ENCODE measurements at regions of chr2 and their contacts with region 1.

Region 1: GRCh38 chr2:85327822-85328617 is at the start of gene TGOLN2:
- DNase-seq: peak; percentile 75 to 97 (median 92)

Region 2: DNA sequence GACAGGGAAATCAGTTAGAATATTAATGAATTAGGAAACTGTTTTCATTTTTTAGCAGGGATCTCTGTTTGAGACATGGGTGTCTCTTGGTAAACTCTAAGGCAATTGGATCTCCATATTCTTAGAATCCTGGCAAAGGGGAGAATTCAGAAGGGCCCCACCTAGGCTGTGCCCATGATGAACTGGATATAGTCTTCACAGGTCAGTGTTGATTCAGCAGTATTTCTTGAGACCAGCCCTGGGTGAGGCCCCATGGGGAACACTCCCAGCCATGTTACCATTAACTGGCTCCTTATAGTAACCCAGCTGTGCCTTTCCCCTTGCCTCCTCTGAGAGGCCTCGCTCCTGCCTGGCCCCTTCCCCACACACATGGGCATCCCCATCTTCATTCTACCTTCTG is 118.1 kb before region 1 on chr2:
- intact Hi-C with region 1: no loop called
- DNase-seq: no peak

Region 3: GRCh38 chr2:85312404-85312803 is 15.6 kb before region 1 on chr2:
- intact Hi-C with region 1: no loop called
- DNase-seq: no peak

Region 4: DNA sequence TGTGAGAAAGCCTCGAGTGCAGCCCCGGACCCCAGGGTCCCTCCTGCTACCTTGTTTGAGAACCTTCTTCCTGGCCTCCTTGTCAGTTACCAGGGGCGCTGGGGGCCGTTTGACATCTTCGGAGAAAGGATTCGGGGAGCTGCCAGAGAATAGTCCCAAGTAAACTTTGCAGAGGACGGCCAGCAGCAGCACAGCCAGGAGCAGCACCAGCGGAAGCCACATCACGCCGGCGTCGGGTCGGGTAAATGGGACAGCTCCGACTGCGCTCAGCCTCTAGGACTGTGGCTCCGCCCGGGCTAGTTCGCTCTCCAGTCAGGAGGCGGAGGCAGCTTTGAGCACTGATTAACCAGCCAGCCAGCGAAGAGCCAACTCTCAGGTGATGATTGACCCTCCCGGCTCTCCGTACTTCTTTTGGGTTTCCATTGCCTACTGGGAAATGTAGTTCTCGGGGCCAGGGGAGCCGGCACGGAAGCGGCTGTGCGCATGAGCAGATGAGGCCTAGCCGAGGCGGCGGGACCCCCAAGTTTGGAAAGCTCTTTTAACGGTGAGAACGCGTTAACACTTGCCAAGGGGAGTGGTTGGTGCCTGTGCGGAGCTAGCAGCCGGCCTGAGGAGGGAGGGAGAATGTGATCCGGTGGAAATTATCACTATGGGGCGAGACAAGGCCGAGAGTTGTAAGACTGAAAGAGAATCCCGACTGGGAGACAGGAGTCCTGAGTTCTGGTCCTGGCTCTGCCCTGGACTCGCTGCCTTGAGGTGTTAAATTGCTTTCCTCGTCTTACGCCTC is 26.5 kb after region 1 on chr2 and contains the starts of genes ELMOD3 and RETSAT:
- intact Hi-C with region 1: loop called (anchors 1 kb)
- DNase-seq: peak; percentile 91 to 99 (median 96)

Region 5: DNA sequence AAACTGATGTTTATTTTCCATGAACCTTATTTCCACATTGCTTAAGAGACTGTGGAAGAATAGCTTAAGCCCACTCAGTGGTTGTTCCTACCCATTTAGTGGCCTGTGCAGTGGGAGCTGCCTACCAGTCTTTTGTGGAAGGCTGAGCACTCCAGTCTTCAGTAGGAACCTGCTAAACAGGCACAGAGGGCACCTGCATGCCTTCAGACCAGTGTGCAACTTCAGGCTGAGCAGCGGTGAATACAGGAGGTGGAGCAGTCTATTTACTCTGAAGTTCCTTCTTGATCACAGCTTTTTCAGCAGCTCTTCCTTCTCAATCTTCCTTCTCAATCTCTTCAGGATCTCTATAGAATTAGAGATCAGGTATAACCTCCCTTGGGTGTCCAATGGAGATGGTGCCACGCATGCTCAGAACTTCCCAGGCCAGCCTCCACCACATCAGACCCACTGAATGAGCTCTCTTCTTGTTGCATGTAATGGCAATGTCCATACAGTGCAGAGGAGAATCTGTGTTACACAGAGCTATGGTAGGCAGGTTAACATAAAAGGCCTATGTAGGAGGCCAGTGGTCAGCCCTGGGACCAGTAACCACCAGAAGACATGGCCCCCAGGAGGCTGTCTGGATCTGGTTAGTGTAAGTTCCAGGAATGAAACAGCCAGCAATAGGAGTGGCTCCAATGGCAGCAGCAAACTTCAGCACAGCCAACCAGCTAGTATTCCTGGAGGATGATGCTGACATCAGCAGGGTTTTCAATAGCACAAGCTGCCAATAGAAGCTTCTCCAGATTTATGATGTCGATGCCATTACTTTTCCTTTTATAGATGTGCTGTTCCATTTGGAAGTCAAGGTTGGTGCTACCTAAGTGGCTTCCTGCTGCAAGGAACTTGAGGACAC is 163.1 kb after region 1 on chr2:
- intact Hi-C with region 1: no loop called
- DNase-seq: no peak

Region 6: DNA sequence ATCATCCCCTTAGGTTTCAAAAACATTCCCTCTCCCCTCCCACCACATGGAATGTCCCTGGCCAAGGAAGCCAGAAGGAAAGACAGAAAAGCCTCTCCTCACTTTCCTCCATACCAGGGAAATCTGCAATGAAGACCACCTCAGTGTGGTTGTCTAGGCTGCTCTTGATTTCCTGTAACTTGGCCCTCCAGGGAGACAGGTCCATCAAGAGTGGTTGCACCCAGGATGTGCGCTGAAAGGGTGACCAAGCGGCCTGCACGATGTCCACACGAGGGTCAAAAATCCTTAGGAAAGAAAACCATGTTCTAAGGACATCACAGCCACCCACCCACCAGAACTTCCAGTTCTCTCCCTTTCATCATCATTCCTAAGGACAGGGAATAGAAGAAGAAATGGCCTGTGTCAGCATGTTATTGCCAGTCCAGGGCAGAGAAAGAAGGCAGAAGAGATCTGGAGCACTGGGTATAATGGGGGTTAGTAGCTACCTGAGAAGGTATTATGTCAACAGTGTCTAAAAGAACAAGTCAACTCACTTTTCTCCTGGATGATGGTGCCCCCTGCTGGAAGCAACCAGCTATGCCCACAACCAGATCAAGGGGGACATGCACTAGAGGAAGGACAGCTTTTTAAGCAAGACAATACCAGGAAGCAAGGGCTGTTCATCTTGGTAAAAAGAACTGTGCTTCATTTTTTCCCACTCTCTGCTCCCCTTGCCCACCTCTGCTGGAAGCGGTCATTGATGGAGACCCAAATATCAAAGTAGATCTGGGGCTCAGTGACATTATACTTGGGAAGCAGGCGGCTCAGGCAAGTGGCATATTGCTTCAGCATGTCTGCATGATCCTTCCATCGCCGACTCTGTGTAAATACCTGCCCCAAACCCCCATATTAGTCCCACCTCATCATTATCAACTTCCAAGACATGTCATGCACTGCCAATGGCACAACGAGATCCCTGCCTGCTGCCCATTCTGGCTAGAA is 224.0 kb after region 1 on chr2:
- intact Hi-C with region 1: loop called (anchors 10 kb)
- DNase-seq: peak; percentile 59 to 96 (median 89)